Activated CD8-positive, alpha-beta T cell treated with anti-CD3 and anti-CD28 coated beads, Interleukin-2, amount 10 ng/mL, durations not matched to agents 7 days and 5 days (primary cell): ENCODE measurements at regions of chr22 and their contacts with region 1.

Region 1: GRCh38 chr22:23913661-23914353 is 19.6 kb downstream of the MIF start:
- DNase-seq: peak; percentile 100
- ATAC-seq: peak; percentile 100
- H3K4me3 Mint-ChIP-seq: peak overlapping the region; percentile 97
- H3K27ac Mint-ChIP-seq: peak overlapping the region; percentile 99
- H3K4me1 Mint-ChIP-seq: peaks cover 39% of the 10 kb centered on the region
- H3K27me3 Mint-ChIP-seq: no peaks in the 10 kb centered on the region

Region 2: DNA sequence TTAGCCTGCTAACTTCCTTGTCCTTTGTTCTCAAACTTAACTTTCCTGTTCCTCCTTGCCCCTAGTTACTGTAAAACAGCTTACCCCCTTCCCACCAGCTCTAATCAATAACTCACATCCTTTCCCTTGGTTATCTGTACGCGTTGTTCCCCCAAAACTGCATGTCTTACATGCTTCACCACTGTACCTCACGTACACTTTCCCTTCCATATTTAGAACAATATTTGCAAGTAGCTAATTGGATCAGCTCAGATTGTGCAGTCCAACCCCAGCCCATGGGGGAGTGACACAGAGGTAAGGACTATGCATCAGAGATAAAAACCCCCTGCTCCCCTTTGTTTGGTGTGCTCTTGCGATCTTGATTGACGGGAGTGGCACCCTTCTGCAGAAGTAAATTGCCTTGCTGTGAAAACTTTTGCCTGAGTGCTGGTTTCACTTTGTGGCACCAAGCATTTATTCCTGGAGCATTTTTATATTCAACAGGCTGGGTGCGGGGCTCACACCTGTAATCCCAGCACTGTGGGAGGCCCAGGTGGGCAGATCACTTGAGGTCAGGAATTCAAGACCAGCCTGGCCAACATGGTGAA is 11.3 kb after region 1 on chr22:
- CTCF ChIA-PET with region 1: interaction called, 3 read pairs
- POLR2A ChIA-PET with region 1: interaction called, 10 read pairs
- DNase-seq: peak; percentile 16
- ATAC-seq: no peak
- H3K4me3 Mint-ChIP-seq: no peak overlapping the region
- H3K27ac Mint-ChIP-seq: no peak overlapping the region
- H3K4me1 Mint-ChIP-seq: peaks cover 27% of the 10 kb centered on the region
- H3K27me3 Mint-ChIP-seq: no peaks in the 10 kb centered on the region

Region 3: GRCh38 chr22:24037851-24038765 is 124.3 kb after region 1 on chr22:
- CTCF ChIA-PET with region 1: no interaction called
- POLR2A ChIA-PET with region 1: no interaction called
- DNase-seq: no peak
- ATAC-seq: peak; percentile 63
- H3K4me3 Mint-ChIP-seq: no peak overlapping the region
- H3K27ac Mint-ChIP-seq: peak overlapping the region; percentile 3
- H3K4me1 Mint-ChIP-seq: peaks cover 15% of the 10 kb centered on the region
- H3K27me3 Mint-ChIP-seq: no peaks in the 10 kb centered on the region